ENCODE measurements at regions of chr3 and their contacts with region 1.

Region 1: GRCh38 chr3:47522082-47522987 is 8.8 kb upstream of the ELP6 start:
- DNase-seq: no peak
- H3K4me3 ChIP-seq: no peak overlapping the region
- H3K27ac ChIP-seq: no peak overlapping the region
- H3K4me1 ChIP-seq: peaks cover 4% of the 10 kb centered on the region
- H3K27me3 ChIP-seq: no peaks in the 10 kb centered on the region
- CTCF ChIP-seq: peak; percentile 91 to 95 (median 94)
- POLR2A ChIP-seq: no peak

Region 2: GRCh38 chr3:47791193-47791855 is 269.0 kb after region 1 on chr3:
- intact Hi-C with region 1: loop called (anchors 2 kb)
- DNase-seq: no peak
- H3K4me3 ChIP-seq: no peak overlapping the region
- H3K27ac ChIP-seq: no peak overlapping the region
- H3K4me1 ChIP-seq: no peaks in the 10 kb centered on the region
- H3K27me3 ChIP-seq: no peaks in the 10 kb centered on the region
- CTCF ChIP-seq: no peak
- POLR2A ChIP-seq: no peak